SK-MEL-5 (cell line): ENCODE measurements at regions of chr4 and their contacts with region 1.

Region 1: DNA sequence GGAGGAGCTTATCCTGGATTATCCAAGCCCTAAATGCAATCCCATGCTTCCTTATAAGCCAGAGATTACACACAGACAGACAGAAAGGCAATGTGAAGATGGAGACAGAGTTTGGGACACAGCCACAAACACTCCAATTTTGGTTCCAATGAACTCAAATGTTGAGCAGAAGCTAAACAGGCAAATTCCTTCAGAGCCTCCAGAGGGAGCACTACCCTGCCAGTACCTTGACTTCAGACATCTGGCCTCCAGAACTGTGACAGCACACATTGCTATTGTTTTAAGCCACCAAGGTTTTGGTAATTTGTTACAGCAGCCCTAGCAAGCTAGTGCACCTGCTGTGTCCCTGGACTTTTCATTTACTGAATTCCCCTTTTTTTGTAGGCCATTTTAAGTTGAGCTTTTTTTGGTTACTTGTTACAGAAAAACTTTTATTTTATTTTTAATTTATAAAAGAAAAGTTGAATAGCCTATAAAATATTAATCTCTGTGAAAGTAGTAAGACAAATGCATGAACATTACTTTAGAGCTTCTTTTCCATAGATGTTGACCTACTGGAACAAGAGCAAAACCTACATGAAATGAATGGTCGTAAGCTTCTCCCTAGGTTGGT is 33.4 kb upstream of the SRD5A3 start:
- DNase-seq: peak; percentile 64

Region 2: DNA sequence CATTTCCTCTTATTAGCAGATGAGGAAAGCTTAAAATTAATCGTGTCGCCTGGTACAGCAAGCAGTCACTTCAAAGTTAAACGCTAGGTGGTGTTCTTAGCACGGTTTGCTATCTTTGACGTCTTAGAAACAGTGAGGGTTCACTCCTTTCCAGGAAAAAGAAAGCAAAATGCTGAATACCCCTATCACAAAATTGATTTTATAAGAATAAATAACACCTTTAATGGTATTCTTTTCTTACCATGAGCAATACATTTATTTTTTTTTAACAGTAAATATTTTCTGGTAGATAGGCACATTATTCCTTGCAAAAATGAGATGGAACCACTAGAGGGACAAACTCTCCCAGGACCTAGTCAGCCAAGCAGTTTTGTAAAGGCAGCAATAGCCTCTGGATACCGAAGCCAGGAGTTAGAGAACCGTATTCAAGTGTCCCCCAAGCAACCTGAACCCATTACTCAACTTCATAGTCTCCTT is 341.1 kb before region 1 on chr4:
- in situ Hi-C with region 1: loop called (anchors 25 kb)
- DNase-seq: peak; percentile 67

Region 3: DNA sequence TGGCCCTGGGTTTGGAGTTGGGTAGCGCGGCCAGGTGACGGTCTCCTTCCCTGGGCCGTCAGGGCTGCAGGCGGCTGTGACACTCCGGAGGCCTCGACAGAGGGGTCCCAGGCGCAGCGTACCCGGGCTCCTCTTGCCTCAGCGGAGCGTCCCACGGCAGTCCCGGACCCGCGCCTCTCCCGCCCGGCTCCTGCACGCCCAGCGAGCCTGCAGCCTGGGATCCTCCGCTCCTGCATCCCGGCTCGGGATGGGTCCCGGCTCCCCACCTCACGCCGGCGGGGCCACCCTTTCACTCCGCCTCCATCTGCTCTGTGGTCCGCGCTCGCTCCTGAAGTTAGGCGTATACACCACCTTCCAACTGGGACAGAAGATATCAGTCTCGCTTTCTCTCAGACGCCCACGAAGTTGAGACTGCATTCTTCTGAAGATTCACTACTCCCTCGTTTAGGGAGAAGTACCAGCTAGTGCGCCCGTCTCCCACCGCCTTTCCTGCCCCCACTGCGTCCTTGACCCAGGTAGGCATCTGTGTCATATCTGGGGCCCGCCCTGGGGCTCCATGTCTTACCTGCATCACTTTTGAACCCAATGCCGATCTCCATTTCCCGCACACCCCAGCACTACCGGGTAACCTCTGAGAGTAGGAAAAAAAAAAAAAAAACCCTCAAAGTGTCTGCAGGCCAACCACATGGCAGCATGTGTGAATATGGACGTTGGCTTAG is 154.9 kb before region 1 on chr4:
- in situ Hi-C with region 1: no loop called
- DNase-seq: no peak